ENCODE measurements at regions of chr4 and their contacts with region 1.

Region 1: DNA sequence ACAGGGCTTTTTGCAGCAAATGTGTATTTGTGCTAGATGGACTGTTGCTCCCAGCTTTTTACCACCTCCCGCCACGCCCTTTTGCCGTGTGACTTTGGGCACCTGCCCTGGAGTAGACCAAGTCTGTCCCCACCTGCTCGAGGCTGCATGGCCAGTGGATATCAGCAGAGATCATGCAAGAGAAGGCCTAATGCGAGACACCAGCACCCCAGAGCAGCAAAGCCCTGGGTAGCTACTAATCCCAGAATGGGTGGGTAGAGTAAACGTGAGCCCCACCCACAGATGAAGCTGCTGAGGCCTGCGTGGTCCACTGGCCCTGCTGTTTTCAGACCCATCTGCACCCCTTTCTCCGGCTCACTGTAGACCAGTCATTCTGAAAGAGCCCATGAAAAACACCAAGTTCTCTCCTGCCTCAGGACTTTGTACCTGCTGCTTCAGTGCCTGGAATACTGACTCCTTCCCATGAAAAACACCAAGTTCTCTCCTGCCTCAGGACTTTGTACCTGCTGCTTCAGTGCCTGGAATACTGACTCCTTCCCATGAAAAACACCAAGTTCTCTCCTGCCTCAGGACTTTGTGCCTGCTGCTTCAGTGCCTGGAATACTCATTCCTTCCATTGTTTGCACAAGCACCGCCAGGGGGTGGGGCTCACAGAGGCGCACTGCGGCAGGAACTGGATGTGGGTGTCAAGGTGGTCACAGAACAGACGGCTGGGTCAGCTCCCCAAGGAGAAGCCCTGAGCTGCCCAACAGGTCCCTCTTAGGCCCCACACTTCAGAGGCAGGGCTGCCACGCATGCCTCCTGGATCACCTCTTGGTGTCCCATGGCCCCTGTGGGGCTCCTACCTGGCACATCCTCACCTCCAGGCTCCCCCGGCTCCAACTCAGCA is 5.1 kb upstream of the TNIP2 start:
- DNase-seq: peak in 1 of 14 experiments; percentile 24
- ATAC-seq: no peak
- H3K4me3 ChIP-seq: no peak overlapping the region
- H3K4me3 Mint-ChIP-seq: peak overlapping the region; percentile 1
- H3K27ac ChIP-seq: no peak overlapping the region
- H3K27ac Mint-ChIP-seq: no peak overlapping the region
- H3K4me1 ChIP-seq: peaks cover 18% of the 10 kb centered on the region
- H3K4me1 Mint-ChIP-seq: peaks cover 8% of the 10 kb centered on the region
- H3K27me3 ChIP-seq: no peaks in the 10 kb centered on the region
- H3K27me3 Mint-ChIP-seq: no peaks in the 10 kb centered on the region
- CTCF ChIP-seq: no peak

Region 2: GRCh38 chr4:2714061-2714770 is 47.1 kb before region 1 on chr4:
- CTCF ChIA-PET with region 1: interaction called, 10 read pairs
- POLR2A ChIA-PET with region 1: interaction called, 5 read pairs
- intact Hi-C with region 1: no loop called
- DNase-seq: peak in 13 of 14 experiments; percentile 15 to 75 (median 38)
- ATAC-seq: peak; percentile 93
- H3K4me3 ChIP-seq: no peak overlapping the region
- H3K4me3 Mint-ChIP-seq: peak overlapping the region; percentile 8
- H3K27ac ChIP-seq: peak overlapping the region; percentile 23 to 49
- H3K27ac Mint-ChIP-seq: peak overlapping the region; percentile 72
- H3K4me1 ChIP-seq: peaks cover 18% of the 10 kb centered on the region
- H3K4me1 Mint-ChIP-seq: peaks cover 30% of the 10 kb centered on the region
- H3K27me3 ChIP-seq: no peaks in the 10 kb centered on the region
- H3K27me3 Mint-ChIP-seq: no peaks in the 10 kb centered on the region
- CTCF ChIP-seq: no peak

Region 3: DNA sequence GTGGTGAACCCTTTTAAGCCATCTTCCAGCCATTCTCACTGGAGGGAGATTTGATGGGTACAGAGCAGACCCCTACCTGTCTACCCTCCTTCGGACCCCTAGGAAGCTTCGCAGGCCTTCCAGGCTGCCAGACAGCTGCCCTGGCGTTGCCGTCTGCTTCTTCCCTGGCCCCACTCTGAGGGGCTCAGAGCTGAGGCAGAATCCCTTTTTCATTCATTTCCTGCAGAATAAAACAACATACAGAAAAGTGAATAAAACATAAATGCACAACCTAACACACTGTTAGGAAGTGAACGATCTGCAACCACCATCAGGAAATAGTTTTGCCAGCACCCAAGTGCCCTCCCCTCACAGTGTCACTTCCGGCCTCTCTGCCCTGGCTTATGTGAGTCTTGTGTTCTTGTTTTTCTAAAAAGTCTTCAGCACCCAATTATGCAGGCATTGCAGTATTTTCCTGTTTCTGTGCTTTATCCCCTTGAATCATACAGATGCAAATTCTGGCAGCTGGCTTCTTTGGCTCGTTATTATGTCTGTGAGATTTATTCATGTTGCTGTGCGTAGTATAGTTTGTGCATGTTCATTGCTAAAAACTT is 76.7 kb after region 1 on chr4:
- CTCF ChIA-PET with region 1: no interaction called
- POLR2A ChIA-PET with region 1: interaction called, 4 read pairs
- intact Hi-C with region 1: loop called (anchors 2 to 5 kb)
- DNase-seq: peak; percentile 56 to 89 (median 74)
- ATAC-seq: peak; percentile 98
- H3K4me3 ChIP-seq: peak overlapping the region; percentile 50
- H3K4me3 Mint-ChIP-seq: peak overlapping the region; percentile 86
- H3K27ac ChIP-seq: peak overlapping the region; percentile 76
- H3K27ac Mint-ChIP-seq: peak overlapping the region; percentile 89
- H3K4me1 ChIP-seq: peaks cover 69% of the 10 kb centered on the region
- H3K4me1 Mint-ChIP-seq: peaks cover 59% of the 10 kb centered on the region
- H3K27me3 ChIP-seq: no peaks in the 10 kb centered on the region
- H3K27me3 Mint-ChIP-seq: no peaks in the 10 kb centered on the region
- CTCF ChIP-seq: no peak

Region 4: DNA sequence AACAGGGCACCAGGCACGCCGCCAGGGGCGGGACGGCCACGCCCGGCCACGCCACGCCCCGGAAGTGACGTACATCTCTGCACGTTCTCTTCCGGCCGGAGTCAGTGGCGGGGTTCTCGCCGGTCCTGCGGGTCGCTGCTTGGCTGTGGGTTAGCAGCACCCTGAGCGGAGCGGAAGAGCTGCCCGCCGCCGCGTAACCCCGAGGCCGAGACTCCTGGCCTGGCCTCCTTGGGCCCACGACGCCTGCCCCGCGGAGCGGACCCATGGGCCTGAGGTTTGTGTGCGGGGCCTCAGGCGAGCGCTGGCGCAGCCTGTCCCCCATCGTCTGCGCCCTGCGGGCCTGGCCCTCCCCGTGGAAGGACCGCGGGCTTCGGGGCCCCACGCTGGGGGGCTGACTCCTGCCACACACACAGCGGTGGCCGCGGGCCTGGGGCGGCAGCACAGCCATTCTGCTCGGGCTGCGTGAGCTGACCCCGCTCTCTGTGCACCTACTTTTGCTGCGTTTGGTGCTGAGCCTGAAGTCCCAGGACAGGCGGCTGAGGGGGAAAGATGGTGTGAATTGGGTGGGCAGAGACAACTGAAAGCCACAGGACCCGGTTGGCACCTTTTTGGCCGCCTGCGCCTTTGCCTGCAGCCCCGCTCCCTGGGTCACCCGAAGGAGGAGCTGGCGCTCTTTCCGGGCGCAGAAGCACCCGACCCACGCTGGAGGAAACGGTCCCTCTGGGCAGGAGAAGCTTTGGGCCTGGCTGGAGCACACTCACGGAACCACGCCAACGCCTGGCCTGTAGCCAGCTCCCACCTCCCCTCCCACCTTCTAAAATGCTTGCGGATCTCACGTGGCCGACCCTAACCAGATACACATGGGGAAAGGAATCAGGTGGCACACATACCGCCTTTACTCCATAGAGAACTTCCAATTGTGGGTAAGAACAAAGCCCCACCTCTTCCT is 173.8 kb after region 1 on chr4:
- CTCF ChIA-PET with region 1: no interaction called
- POLR2A ChIA-PET with region 1: interaction called, 9 read pairs
- intact Hi-C with region 1: loop called (anchors 2 kb)
- DNase-seq: peak; percentile 93 to 99 (median 96)
- ATAC-seq: peak; percentile 58
- H3K4me3 ChIP-seq: peak overlapping the region; percentile 92
- H3K4me3 Mint-ChIP-seq: peak overlapping the region; percentile 93
- H3K27ac ChIP-seq: peak overlapping the region; percentile 82 to 87
- H3K27ac Mint-ChIP-seq: peak overlapping the region; percentile 94
- H3K4me1 ChIP-seq: peaks cover 71% of the 10 kb centered on the region
- H3K4me1 Mint-ChIP-seq: peaks cover 45% of the 10 kb centered on the region
- H3K27me3 ChIP-seq: no peaks in the 10 kb centered on the region
- H3K27me3 Mint-ChIP-seq: no peaks in the 10 kb centered on the region
- CTCF ChIP-seq: no peak

Region 5: GRCh38 chr4:3041192-3042142 is 280.2 kb after region 1 on chr4:
- CTCF ChIA-PET with region 1: no interaction called
- POLR2A ChIA-PET with region 1: no interaction called
- intact Hi-C with region 1: loop called (anchors 1 to 5 kb)
- DNase-seq: peak in 11 of 14 experiments; percentile 13 to 79 (median 27)
- ATAC-seq: peak; percentile 37
- H3K4me3 ChIP-seq: peak overlapping the region; percentile 58
- H3K4me3 Mint-ChIP-seq: peak overlapping the region; percentile 90
- H3K27ac ChIP-seq: peak overlapping the region in 1 of 2 donors; percentile 51
- H3K27ac Mint-ChIP-seq: peak overlapping the region; percentile 82
- H3K4me1 ChIP-seq: peaks cover 71% of the 10 kb centered on the region
- H3K4me1 Mint-ChIP-seq: peaks cover 54% of the 10 kb centered on the region
- H3K27me3 ChIP-seq: no peaks in the 10 kb centered on the region
- H3K27me3 Mint-ChIP-seq: peaks cover 12% of the 10 kb centered on the region
- CTCF ChIP-seq: no peak